Caco-2 (cell line): ENCODE measurements at regions of chrX and their contacts with region 1.

Region 1: DNA sequence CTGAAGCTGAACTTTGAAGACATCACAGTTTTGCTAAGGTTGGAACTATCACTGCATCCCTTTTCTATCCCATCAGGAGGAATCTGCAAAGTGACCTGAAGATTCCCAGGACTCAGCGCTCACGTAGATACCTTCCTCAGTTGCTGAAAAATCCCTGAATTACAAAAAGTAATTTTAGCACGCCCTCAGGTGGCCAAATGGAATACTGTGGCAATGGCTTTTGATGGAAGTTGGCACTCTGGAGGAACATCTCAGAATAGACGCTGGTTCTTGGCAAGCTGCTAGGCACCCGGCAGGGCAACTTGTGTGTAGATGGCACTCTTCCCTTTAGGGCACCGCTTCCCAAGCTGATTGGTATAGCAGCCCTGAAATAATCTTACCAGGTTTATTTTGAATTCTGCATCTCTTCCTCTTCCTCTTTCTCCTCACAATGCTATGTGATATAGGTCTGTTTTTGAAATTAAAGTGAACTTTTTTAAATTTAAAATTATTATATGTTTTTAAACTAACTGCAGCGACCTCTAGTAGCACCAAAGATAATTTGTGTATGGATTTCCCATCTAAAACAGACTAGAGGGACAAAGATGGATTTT is 16.3 kb upstream of the ESX1 start:
- DNase-seq: peak; percentile 26 to 36
- H3K4me3 ChIP-seq: no peak overlapping the region
- H3K4me3 Mint-ChIP-seq: no peak overlapping the region
- H3K27ac Mint-ChIP-seq: no peak overlapping the region
- H3K4me1 ChIP-seq: no peaks in the 10 kb centered on the region
- H3K4me1 Mint-ChIP-seq: no peaks in the 10 kb centered on the region
- H3K27me3 ChIP-seq: no peaks in the 10 kb centered on the region
- H3K27me3 Mint-ChIP-seq: peaks cover 4% of the 10 kb centered on the region
- CTCF ChIP-seq: peak; percentile 40 to 53

Region 2: GRCh38 chrX:104195489-104196084 is 75.4 kb before region 1 on chrX:
- CTCF ChIA-PET with region 1: interaction called, 4 read pairs
- POLR2A ChIA-PET with region 1: no interaction called
- intact Hi-C with region 1: loop called (anchors 1 kb)
- DNase-seq: peak in 1 of 2 experiments; percentile 16
- H3K4me3 ChIP-seq: no peak overlapping the region
- H3K4me3 Mint-ChIP-seq: no peak overlapping the region
- H3K27ac Mint-ChIP-seq: no peak overlapping the region
- H3K4me1 ChIP-seq: no peaks in the 10 kb centered on the region
- H3K4me1 Mint-ChIP-seq: no peaks in the 10 kb centered on the region
- H3K27me3 ChIP-seq: no peaks in the 10 kb centered on the region
- H3K27me3 Mint-ChIP-seq: no peaks in the 10 kb centered on the region
- CTCF ChIP-seq: peak; percentile 36 to 48